Heart left ventricle (tissue), 16 donors: ENCODE measurements at regions of chr3 and their contacts with region 1.

Region 1: DNA sequence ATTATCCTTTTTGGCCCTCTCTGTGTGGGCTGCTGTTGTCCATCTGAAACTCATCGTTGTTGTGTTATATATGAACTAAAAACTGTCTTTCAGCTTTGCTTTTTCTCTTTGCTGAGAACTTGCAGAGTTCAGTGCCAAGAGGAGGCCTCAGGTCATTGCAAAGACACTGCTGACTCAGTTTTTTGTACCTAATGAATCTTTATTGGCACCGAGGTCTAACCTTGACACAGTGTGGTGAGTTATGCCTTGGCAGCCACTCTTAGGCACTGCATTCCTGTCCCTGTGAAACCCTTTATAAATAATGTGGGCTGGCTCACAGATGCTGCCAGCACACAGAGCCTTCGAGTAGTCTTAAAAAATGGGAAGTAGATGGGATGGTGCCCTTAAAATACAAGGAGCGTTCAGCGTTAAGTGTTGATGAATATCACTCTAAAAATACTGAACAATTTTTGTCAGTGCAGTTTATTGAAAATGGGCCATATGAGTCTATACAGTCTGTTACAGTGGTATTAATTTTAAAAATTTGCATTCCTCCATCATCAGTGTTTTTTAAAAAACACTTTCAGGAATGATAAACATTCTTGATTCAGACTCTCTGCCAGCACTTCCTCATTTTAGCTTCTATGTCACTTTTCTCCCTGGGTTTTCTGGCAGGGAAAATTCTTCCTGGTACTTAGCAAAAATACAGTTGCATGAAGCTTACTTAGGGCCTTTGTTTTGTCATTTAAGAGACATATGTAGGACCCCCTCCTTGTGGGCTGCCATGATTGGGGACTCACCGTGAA is 234.1 kb downstream of the CACNA2D3 start:
- DNase-seq: peak in 4 of 5 donors; percentile 29 to 73 (median 51)
- ATAC-seq: peak; percentile 72 to 89 (median 88)
- H3K4me3 ChIP-seq: no peak overlapping the region
- H3K27ac ChIP-seq: peak overlapping the region in 5 of 12 donors; percentile 15 to 57 (median 32)
- H3K4me1 ChIP-seq: peaks cover 0 to 58% (median 24%) of the 10 kb centered on the region in 12 donors
- H3K27me3 ChIP-seq: no peaks in the 10 kb centered on the region
- CTCF ChIP-seq: no peak
- POLR2A ChIP-seq: no peak

Region 2: GRCh38 chr3:54146506-54147239 is 209.8 kb before region 1 on chr3:
- intact Hi-C with region 1: loop called in 2 of 10 experiments (anchors 5 kb)
- DNase-seq: peak; percentile 37 to 79 (median 56)
- ATAC-seq: peak; percentile 88 to 94 (median 92)
- H3K4me3 ChIP-seq: no peak overlapping the region
- H3K27ac ChIP-seq: no peak overlapping the region
- H3K4me1 ChIP-seq: peaks cover 0 to 10% (median 0%) of the 10 kb centered on the region in 12 donors
- H3K27me3 ChIP-seq: no peaks in the 10 kb centered on the region
- CTCF ChIP-seq: peak; percentile 30 to 70 (median 59)
- POLR2A ChIP-seq: no peak

Region 3: DNA sequence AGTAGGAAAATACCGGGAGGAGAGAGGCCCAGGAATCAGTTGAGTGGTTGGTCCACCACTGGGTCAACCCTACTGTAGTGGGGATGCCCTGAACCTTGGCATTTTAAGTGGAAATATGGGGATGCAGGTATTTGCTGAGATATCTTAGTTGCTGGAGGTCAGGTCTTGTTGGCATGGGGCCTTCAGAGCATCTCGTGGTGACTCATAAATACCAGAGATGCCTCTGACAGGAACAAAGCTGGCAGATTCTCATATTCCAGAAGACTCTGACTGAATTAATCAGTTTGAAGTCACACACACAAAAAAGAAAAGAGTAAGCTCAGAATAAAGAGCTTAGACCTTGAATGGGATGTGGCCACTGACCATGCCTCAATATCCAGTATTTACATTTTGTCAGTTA is 142.5 kb before region 1 on chr3:
- intact Hi-C with region 1: loop called in 2 of 10 experiments (anchors 5 kb)
- DNase-seq: no peak
- ATAC-seq: peak in 1 of 4 donors; percentile 63
- H3K4me3 ChIP-seq: no peak overlapping the region
- H3K27ac ChIP-seq: peak overlapping the region in 1 of 12 donors; percentile 34
- H3K4me1 ChIP-seq: peaks cover 0 to 34% (median 1%) of the 10 kb centered on the region in 12 donors
- H3K27me3 ChIP-seq: no peaks in the 10 kb centered on the region
- CTCF ChIP-seq: no peak
- POLR2A ChIP-seq: no peak

Region 4: GRCh38 chr3:54283470-54283869 is 73.0 kb before region 1 on chr3:
- intact Hi-C with region 1: loop called in 1 of 10 experiments (anchors 10 kb)
- DNase-seq: no peak
- ATAC-seq: peak in 3 of 4 donors; percentile 60 to 66 (median 63)
- H3K4me3 ChIP-seq: no peak overlapping the region
- H3K27ac ChIP-seq: no peak overlapping the region
- H3K4me1 ChIP-seq: peaks cover 0 to 6% (median 0%) of the 10 kb centered on the region in 12 donors
- H3K27me3 ChIP-seq: no peaks in the 10 kb centered on the region
- CTCF ChIP-seq: no peak
- POLR2A ChIP-seq: no peak

Region 5: GRCh38 chr3:54649551-54649950 is 293.1 kb after region 1 on chr3:
- intact Hi-C with region 1: no loop called
- DNase-seq: no peak
- ATAC-seq: no peak
- H3K4me3 ChIP-seq: no peak overlapping the region
- H3K27ac ChIP-seq: no peak overlapping the region
- H3K4me1 ChIP-seq: no peaks in the 10 kb centered on the region
- H3K27me3 ChIP-seq: no peaks in the 10 kb centered on the region
- CTCF ChIP-seq: no peak
- POLR2A ChIP-seq: no peak